ENCODE measurements at regions of chr11 and their contacts with region 1.

Region 1: DNA sequence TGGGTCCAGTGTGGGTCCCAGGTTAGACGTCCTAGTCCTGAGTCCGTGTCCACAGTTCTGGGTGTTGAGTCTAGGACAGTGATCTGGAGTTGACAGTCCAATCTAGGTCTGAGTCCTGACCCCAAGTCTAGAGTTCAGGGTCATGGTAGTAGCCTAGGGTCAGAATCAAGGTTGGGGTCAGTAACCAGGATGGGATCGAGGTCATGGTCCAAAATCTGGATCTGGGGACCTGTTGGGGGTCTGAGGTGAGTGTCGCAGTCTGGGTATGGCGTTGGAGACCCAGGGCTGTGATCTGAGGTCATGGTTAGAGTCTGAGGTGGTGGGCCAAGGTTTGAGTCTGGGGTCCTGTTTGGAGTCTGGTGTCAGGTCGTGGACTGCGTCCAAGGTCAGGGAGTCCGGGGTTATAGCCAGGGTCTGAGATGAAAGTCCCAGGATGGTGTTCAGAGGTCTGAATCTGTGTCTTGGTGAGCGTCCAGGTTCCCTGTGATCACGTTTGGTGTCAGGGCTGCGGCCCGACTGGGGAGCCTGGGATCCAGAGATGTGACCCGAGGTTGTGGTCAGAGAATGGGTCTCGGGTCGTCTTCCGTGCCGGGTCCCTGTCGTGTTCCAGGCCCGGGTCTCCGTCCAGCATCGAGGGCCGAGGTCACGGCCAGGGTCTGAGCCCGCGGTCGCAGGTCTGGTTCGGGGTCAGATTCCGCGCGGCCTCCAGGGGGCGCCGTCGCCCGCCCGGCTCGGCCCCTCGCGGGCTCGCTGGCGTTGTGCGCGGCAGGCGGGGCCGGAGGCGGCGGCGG is 445 bp upstream of the GRK2 start:
- DNase-seq: peak; percentile 58 to 70
- ATAC-seq: peak; percentile 74 to 77
- H3K4me3 ChIP-seq: peak overlapping the region; percentile 8 to 44 (median 21)
- H3K27ac ChIP-seq: peak overlapping the region; percentile 67 to 86 (median 74)
- H3K4me1 ChIP-seq: peaks cover 41 to 59% of the 10 kb centered on the region in 2 donors
- H3K27me3 ChIP-seq: no peaks in the 10 kb centered on the region
- CTCF ChIP-seq: peak; percentile 71 to 96 (median 85)
- POLR2A ChIP-seq: no peak

Region 2: DNA sequence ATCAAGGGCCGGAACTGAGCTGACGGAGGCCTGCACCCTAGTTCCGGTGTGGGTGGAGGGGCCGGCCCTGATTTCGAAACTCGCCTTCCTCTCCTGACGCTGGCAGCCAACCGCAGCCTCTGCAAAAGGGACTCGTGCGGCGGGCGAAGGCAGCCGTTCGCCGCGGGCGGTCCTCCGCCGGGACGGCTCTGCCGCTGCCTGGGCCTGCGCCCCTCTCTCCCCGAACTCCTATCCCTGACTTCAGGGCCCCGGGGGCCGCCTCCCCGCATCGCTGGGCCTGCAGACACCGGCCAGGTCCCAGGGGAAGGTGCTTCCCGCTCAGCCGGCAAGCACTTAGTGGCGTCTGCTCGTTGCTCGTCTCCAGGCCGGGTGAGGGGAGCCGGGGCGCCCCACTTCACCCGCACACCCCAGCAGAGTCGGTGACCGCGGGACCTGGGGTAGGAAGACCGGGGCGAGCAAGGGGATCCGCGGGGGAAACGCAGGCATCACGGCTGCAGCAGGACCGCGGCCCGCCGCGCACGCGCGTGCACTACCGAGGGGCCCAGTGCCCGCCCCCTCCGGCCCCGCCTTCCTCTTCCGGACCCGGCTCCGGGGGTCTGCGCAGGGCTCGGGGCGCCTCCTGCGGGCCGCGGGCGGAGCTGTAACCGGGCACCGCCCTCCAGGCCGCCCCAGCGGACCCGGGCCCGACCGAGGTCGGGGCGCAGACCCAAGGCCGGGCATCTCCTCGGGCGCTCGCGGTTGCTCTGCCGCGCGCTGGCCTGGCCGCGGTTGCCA is 22.8 kb after region 1 on chr11:
- in situ Hi-C with region 1: no loop called
- intact Hi-C with region 1: loop called (anchors 1 kb)
- DNase-seq: peak; percentile 66 to 76
- ATAC-seq: peak; percentile 71 to 74
- H3K4me3 ChIP-seq: peak overlapping the region; percentile 65 to 92 (median 74)
- H3K27ac ChIP-seq: peak overlapping the region; percentile 71 to 91 (median 84)
- H3K4me1 ChIP-seq: peaks cover 20 to 21% of the 10 kb centered on the region in 2 donors
- H3K27me3 ChIP-seq: no peaks in the 10 kb centered on the region
- CTCF ChIP-seq: peak in 4 of 5 experiments; percentile 47 to 69 (median 62)
- POLR2A ChIP-seq: peak; percentile 23 to 30

Region 3: GRCh38 chr11:67303132-67303834 is 37.5 kb after region 1 on chr11 and contains the start of gene SSH3:
- in situ Hi-C with region 1: no loop called
- intact Hi-C with region 1: loop called (anchors 5 kb)
- DNase-seq: peak; percentile 68 to 75
- ATAC-seq: peak; percentile 78 to 80
- H3K4me3 ChIP-seq: peak within 1 kb of the TSS; percentile 76 to 94 (median 90)
- H3K27ac ChIP-seq: peak within 1 kb of the TSS; percentile 83 to 89 (median 86)
- H3K4me1 ChIP-seq: peaks cover 20 to 25% of the 10 kb centered on the region in 2 donors
- H3K27me3 ChIP-seq: no peaks in the 10 kb centered on the region
- CTCF ChIP-seq: no peak
- POLR2A ChIP-seq: peak; percentile 60 to 70
- total RNA-seq, gene SSH3: 7.9 to 16.3 (median 11.9) TPM

Region 4: DNA sequence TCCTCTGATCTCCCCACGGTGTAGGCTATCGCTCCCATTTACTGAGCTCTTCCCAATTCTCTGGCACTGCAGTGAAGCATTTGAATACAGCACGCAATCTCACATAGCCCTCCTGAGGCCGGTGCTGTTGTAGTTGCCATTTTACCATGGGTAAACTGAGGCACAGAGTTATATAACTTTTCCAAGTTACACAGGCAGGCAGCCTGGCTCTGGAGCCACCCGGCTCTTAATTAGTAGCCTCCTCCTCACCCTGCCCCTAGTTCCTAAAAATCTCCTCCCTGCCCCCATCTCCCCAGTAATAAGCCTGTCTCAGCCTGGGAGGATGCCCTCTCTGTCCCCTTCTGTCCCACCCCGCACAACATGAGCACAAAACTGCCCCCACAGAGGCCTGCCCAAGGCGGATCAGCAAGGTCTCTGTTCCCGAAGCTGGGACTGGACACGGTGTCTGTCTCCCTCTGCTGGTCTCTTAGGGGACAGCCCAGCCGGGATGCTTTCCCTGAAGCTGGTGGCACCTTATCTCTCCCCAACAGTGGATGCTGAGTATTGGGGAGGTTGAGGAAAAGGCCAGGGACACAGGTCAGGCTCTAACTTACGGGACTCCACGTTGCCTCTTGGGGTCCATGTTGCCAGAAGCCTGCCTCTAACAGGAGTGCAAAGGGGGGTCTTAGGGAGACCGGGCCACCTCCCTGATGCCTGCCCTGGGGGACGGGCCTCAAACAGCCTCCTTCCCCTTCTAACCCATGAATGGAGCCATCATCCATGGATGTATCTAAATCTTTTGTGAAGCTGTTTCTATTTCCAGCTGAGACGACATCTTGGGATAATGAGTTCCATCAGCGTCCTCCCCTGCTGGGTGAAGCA is 116.7 kb after region 1 on chr11:
- in situ Hi-C with region 1: loop called in 2 of 4 experiments (anchors 5 to 10 kb)
- intact Hi-C with region 1: loop called (anchors 2 kb)
- DNase-seq: peak; percentile 49 to 68
- ATAC-seq: peak; percentile 79 to 88
- H3K4me3 ChIP-seq: no peak overlapping the region
- H3K27ac ChIP-seq: no peak overlapping the region
- H3K4me1 ChIP-seq: no peaks in the 10 kb centered on the region
- H3K27me3 ChIP-seq: peaks cover 0 to 10% (median 0%) of the 10 kb centered on the region in 3 donors
- CTCF ChIP-seq: peak; percentile 94 to 99 (median 97)
- POLR2A ChIP-seq: no peak

Region 5: GRCh38 chr11:67401495-67402191 is 135.8 kb after region 1 on chr11 and contains the start of gene PPP1CA:
- in situ Hi-C with region 1: no loop called
- intact Hi-C with region 1: no loop called
- DNase-seq: peak; percentile 81 to 87
- ATAC-seq: peak; percentile 90 to 92
- H3K4me3 ChIP-seq: peak within 1 kb of the TSS; percentile 70 to 97 (median 80)
- H3K27ac ChIP-seq: peak within 1 kb of the TSS; percentile 87 to 96 (median 90)
- H3K4me1 ChIP-seq: peaks cover 20 to 22% of the 10 kb centered on the region in 2 donors
- H3K27me3 ChIP-seq: no peaks in the 10 kb centered on the region
- CTCF ChIP-seq: peak; percentile 33 to 93 (median 55)
- POLR2A ChIP-seq: peak; percentile 75 to 83
- total RNA-seq, gene PPP1CA: 78.4 to 193 (median 124) TPM